ENCODE measurements at regions of chr7 and their contacts with region 1.

Region 1: GRCh38 chr7:95476904-95477594 is 8.7 kb upstream of the ASB4 start:
- DNase-seq: peak; percentile 74
- H3K4me3 ChIP-seq: no peak overlapping the region
- H3K4me3 Mint-ChIP-seq: no peak overlapping the region
- H3K27ac Mint-ChIP-seq: no peak overlapping the region
- H3K4me1 ChIP-seq: peaks cover 20% of the 10 kb centered on the region
- H3K4me1 Mint-ChIP-seq: peaks cover 11% of the 10 kb centered on the region
- H3K27me3 ChIP-seq: no peaks in the 10 kb centered on the region
- H3K27me3 Mint-ChIP-seq: no peaks in the 10 kb centered on the region
- CTCF ChIP-seq: peak; percentile 71 to 82

Region 2: DNA sequence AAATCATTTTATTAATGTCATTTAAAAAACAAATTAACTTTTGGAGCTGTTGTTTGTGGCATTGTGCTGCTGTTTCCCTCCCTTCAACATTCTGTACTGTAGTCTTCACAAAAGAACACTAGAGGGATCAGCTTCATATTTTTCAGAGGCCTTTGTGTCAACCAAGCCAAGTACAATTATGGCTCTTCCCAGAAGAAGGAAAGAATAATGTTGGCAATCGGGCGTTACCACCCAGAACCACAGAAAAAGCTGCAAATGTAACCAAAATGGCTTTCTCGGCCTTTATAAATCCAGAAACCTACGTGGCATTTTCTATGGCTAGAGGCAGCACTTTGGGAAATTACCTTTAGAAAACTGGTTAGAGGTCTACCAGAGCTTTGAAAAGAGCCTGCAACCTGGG is 1181.2 kb before region 1 on chr7:
- CTCF ChIA-PET with region 1: no interaction called
- POLR2A ChIA-PET with region 1: no interaction called
- intact Hi-C with region 1: loop called (anchors 10 kb)
- DNase-seq: peak in 1 of 2 experiments; percentile 6
- H3K4me3 ChIP-seq: no peak overlapping the region
- H3K4me3 Mint-ChIP-seq: no peak overlapping the region
- H3K27ac Mint-ChIP-seq: no peak overlapping the region
- H3K4me1 ChIP-seq: peaks cover 12% of the 10 kb centered on the region
- H3K4me1 Mint-ChIP-seq: peaks cover 7% of the 10 kb centered on the region
- H3K27me3 ChIP-seq: no peaks in the 10 kb centered on the region
- H3K27me3 Mint-ChIP-seq: peaks cover 5% of the 10 kb centered on the region
- CTCF ChIP-seq: peak; percentile 30 to 57

Region 3: GRCh38 chr7:94933256-94933990 is 543.6 kb before region 1 on chr7:
- CTCF ChIA-PET with region 1: no interaction called
- POLR2A ChIA-PET with region 1: no interaction called
- intact Hi-C with region 1: loop called (anchors 10 kb)
- DNase-seq: no peak
- H3K4me3 ChIP-seq: no peak overlapping the region
- H3K4me3 Mint-ChIP-seq: no peak overlapping the region
- H3K27ac Mint-ChIP-seq: no peak overlapping the region
- H3K4me1 ChIP-seq: peaks cover 10% of the 10 kb centered on the region; the same call in 1 of the 2 replicates
- H3K4me1 Mint-ChIP-seq: peaks cover 8% of the 10 kb centered on the region
- H3K27me3 ChIP-seq: no peaks in the 10 kb centered on the region
- H3K27me3 Mint-ChIP-seq: no peaks in the 10 kb centered on the region
- CTCF ChIP-seq: no peak

Region 4: GRCh38 chr7:95199779-95200558 is 277.1 kb before region 1 on chr7:
- CTCF ChIA-PET with region 1: no interaction called
- POLR2A ChIA-PET with region 1: no interaction called
- intact Hi-C with region 1: loop called (anchors 1 kb)
- DNase-seq: peak in 1 of 2 experiments; percentile 48
- H3K4me3 ChIP-seq: no peak overlapping the region
- H3K4me3 Mint-ChIP-seq: no peak overlapping the region
- H3K27ac Mint-ChIP-seq: no peak overlapping the region
- H3K4me1 ChIP-seq: no peaks in the 10 kb centered on the region
- H3K4me1 Mint-ChIP-seq: no peaks in the 10 kb centered on the region
- H3K27me3 ChIP-seq: no peaks in the 10 kb centered on the region
- H3K27me3 Mint-ChIP-seq: no peaks in the 10 kb centered on the region
- CTCF ChIP-seq: peak; percentile 63 to 88

Region 5: DNA sequence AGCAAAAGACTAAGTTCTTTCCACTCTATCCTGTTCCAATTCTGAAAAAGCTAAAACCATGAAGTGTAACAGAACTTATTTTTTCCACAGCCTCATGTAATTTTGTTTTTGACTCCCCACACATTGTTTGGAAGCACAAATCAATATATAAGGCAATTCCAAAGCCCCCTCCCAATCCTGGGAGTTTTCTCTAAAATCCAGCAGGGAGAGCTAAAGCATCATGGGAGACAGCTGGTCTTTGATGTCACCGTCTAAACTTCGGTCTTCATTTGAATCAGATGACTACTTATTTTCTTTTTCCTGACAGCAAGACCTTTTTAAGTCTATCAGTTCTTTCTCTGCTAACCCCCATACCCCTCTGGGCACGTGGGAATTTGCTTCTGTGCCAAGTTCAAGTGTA is 119.4 kb before region 1 on chr7:
- CTCF ChIA-PET with region 1: interaction called, 3 read pairs
- POLR2A ChIA-PET with region 1: no interaction called
- intact Hi-C with region 1: loop called (anchors 1 kb)
- DNase-seq: no peak
- H3K4me3 ChIP-seq: no peak overlapping the region
- H3K4me3 Mint-ChIP-seq: no peak overlapping the region
- H3K27ac Mint-ChIP-seq: no peak overlapping the region
- H3K4me1 ChIP-seq: no peaks in the 10 kb centered on the region
- H3K4me1 Mint-ChIP-seq: no peaks in the 10 kb centered on the region
- H3K27me3 ChIP-seq: no peaks in the 10 kb centered on the region
- H3K27me3 Mint-ChIP-seq: peaks cover 2% of the 10 kb centered on the region
- CTCF ChIP-seq: peak; percentile 18 to 37

Region 6: DNA sequence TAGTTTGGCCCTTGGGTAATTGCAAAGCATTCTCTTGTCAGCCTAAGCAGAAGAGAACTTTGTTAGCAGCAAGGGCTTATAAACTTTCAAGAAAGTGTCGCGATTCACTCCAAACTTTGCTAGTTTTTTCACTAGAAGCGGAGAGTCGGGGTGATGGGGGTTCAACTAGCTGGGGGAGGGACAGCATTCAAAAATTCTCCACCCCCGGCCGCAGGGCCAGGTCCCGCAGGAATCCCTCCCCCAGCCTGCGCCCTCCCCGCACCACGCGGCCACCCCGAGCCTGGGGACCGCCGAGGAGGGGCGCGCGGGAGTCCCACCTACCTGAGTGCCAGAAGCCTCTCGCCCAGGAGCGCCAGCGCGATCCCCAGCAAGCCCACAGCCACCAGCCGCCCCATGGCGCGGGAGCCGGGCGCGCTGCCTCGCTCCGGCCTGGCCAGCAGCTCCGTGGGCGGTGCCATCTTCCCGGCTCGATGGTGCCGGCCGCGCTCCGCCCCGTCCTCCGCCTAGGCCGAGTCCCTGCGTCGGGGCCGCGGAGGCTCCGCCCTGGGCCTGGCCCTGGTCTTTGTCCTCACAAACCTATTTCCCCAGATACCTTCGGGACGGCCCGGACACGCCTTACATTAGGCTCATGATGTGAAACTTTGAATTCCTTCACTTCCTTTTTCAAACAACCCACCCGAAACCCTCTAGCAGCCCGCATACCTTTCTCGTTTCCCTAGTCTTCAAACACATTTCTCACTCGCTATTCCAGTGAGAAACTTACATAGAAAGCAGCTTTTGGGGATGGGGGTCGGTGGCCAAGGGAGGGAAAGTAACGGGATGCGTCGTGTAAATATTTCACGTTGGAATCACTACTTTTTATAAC is 42.3 kb before region 1 on chr7 and contains the start of gene PON2:
- CTCF ChIA-PET with region 1: no interaction called
- POLR2A ChIA-PET with region 1: interaction called, 9 read pairs
- intact Hi-C with region 1: loop called (anchors 1 kb)
- DNase-seq: peak; percentile 93
- H3K4me3 ChIP-seq: peak within 1 kb of the TSS; percentile 89
- H3K4me3 Mint-ChIP-seq: peak within 1 kb of the TSS; percentile 91
- H3K27ac Mint-ChIP-seq: peak within 1 kb of the TSS; percentile 95
- H3K4me1 ChIP-seq: peaks cover 46% of the 10 kb centered on the region
- H3K4me1 Mint-ChIP-seq: peaks cover 14% of the 10 kb centered on the region
- H3K27me3 ChIP-seq: no peaks in the 10 kb centered on the region
- H3K27me3 Mint-ChIP-seq: no peaks in the 10 kb centered on the region
- CTCF ChIP-seq: no peak
- total RNA-seq, gene PON2: 140 and 141 TPM in 2 replicates

Region 7: DNA sequence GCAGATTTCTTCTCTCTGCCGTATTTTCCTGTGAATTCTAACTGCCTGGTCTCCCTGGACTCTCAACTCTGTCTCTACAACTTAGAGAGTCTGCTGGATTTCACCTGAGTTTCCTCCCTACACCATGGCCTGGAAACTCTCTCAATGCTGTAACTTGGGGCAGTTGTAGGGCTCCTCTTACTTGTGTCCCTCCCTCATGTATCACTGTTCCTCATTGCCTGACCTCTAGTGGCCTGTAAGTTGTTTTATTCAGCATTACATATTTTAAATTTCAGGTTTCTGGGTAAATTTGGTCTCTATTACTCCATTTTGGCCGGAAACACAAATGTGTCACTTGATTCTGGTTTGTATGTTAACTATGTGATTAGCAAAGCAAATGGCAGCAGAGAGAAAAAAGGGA is 366.2 kb after region 1 on chr7:
- CTCF ChIA-PET with region 1: no interaction called
- POLR2A ChIA-PET with region 1: no interaction called
- intact Hi-C with region 1: no loop called
- DNase-seq: no peak
- H3K4me3 ChIP-seq: no peak overlapping the region
- H3K4me3 Mint-ChIP-seq: no peak overlapping the region
- H3K27ac Mint-ChIP-seq: no peak overlapping the region
- H3K4me1 ChIP-seq: peaks cover 28% of the 10 kb centered on the region
- H3K4me1 Mint-ChIP-seq: peaks cover 26% of the 10 kb centered on the region
- H3K27me3 ChIP-seq: no peaks in the 10 kb centered on the region
- H3K27me3 Mint-ChIP-seq: no peaks in the 10 kb centered on the region
- CTCF ChIP-seq: peak in 1 of 2 experiments; percentile 16